Ascending aorta (tissue), 2 donors: ENCODE measurements at regions of chr2 and their contacts with region 1.

Region 1: GRCh38 chr2:231191896-231192872 is 6.2 kb upstream of the ARMC9 start:
- DNase-seq: peak in 1 of 2 donors; percentile 93
- H3K4me3 ChIP-seq: no peak overlapping the region
- H3K27ac ChIP-seq: peak overlapping the region; percentile 96 to 98
- H3K4me1 ChIP-seq: peaks cover 16 to 37% of the 10 kb centered on the region in 2 donors
- H3K27me3 ChIP-seq: no peaks in the 10 kb centered on the region
- CTCF ChIP-seq: peak; percentile 67 to 76 (median 68)

Region 2: GRCh38 chr2:231037731-231038482 is 154.3 kb before region 1 on chr2:
- intact Hi-C with region 1: no loop called
- DNase-seq: no peak
- H3K4me3 ChIP-seq: peak overlapping the region; percentile 16 to 47
- H3K27ac ChIP-seq: no peak overlapping the region
- H3K4me1 ChIP-seq: peaks cover 0 to 3% of the 10 kb centered on the region in 2 donors
- H3K27me3 ChIP-seq: peaks cover 3% of the 10 kb centered on the region
- CTCF ChIP-seq: no peak

Region 3: GRCh38 chr2:231068525-231069222 is 123.5 kb before region 1 on chr2:
- intact Hi-C with region 1: no loop called
- DNase-seq: no peak
- H3K4me3 ChIP-seq: no peak overlapping the region
- H3K27ac ChIP-seq: no peak overlapping the region
- H3K4me1 ChIP-seq: no peaks in the 10 kb centered on the region
- H3K27me3 ChIP-seq: no peaks in the 10 kb centered on the region
- CTCF ChIP-seq: no peak

Region 4: GRCh38 chr2:231104115-231104713 is 88.0 kb before region 1 on chr2:
- intact Hi-C with region 1: loop called (anchors 1 kb)
- DNase-seq: peak in 1 of 2 donors; percentile 81
- H3K4me3 ChIP-seq: no peak overlapping the region
- H3K27ac ChIP-seq: peak overlapping the region; percentile 31 to 50
- H3K4me1 ChIP-seq: no peaks in the 10 kb centered on the region
- H3K27me3 ChIP-seq: no peaks in the 10 kb centered on the region
- CTCF ChIP-seq: peak; percentile 81 to 88 (median 83)

Region 5: DNA sequence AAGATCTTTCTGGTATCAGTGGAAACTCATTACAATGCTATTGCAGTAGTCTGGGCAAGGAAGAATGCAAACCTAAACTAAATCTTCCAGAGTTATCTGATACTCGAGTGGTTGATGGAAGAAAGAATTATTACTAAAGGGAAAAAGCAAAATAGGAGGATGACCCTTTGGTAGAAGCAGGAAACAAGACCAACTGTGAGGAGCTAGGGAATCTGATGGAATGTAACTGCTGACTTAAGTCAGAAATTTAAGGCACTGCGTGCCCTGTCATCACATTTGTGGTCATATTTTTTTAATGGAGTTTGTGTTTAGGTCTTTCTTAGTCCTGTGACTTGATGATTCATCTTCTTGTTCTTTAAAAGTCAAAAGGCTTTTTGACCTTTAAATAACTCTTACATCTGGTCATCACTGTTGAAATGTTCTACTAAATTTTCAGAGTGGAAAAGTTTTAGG is 30.3 kb before region 1 on chr2:
- intact Hi-C with region 1: loop called (anchors 2 kb)
- DNase-seq: no peak
- H3K4me3 ChIP-seq: no peak overlapping the region
- H3K27ac ChIP-seq: peak overlapping the region; percentile 55 to 85
- H3K4me1 ChIP-seq: peaks cover 7 to 24% of the 10 kb centered on the region in 2 donors
- H3K27me3 ChIP-seq: no peaks in the 10 kb centered on the region
- CTCF ChIP-seq: no peak

Region 6: GRCh38 chr2:231222318-231223055 is 30.3 kb after region 1 on chr2:
- intact Hi-C with region 1: loop called (anchors 5 kb)
- DNase-seq: peak in 1 of 2 donors; percentile 73
- H3K4me3 ChIP-seq: peak overlapping the region in 1 of 2 donors; percentile 30
- H3K27ac ChIP-seq: peak overlapping the region; percentile 85 to 88
- H3K4me1 ChIP-seq: peaks cover 0 to 14% of the 10 kb centered on the region in 2 donors
- H3K27me3 ChIP-seq: no peaks in the 10 kb centered on the region
- CTCF ChIP-seq: no peak

Region 7: DNA sequence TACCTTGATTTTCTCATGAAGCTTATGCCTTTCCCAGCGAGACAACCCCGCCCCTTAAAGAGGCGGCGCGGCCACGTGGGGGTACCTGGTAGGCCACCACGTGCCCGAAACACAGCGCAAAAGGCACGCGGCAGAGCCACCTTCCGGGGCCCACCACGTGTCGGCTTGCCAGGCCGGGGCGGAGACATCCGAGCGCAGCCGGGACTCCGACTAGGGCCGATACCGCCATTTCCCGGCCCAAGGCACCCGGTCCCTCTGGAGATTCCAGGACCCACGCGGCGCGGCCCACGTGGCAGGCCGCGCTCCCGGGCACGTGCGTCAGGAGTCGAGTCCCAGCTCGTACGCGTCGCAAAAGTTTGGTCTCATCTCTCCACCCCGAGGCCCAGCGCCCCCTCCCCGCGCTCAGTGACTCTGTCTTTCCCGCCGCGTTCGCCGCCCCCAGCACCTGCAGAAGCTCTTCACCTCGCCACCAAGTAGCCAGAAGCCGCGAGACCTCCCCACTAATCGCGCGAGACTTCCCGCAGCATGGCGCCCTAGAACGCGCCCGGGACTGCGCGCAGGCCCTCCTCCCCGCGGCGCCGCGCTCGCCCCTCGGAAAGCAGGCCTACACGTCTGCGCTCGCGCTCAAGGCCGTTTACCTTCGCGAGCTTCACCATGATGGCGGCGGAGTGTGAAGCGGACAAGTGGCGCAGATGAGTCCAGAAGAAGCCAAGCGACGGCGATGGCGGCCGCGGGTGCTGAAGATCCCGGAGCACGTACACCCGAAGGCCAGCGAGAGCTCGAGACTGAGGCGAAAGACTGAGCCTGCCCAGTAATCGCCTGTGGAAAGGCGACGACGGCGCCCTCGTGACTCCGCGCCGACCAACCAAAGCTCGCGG is 271.8 kb after region 1 on chr2 and contains the start of gene NCL:
- intact Hi-C with region 1: loop called (anchors 5 kb)
- DNase-seq: peak; percentile 35 to 88
- H3K4me3 ChIP-seq: peak within 1 kb of the TSS; percentile 78 to 79
- H3K27ac ChIP-seq: peak within 1 kb of the TSS; percentile 97 to 98
- H3K4me1 ChIP-seq: peaks cover 6 to 16% of the 10 kb centered on the region in 2 donors
- H3K27me3 ChIP-seq: no peaks in the 10 kb centered on the region
- CTCF ChIP-seq: no peak
- total RNA-seq, gene NCL: 136 TPM

Region 8: GRCh38 chr2:231709981-231710798 is 518.0 kb after region 1 on chr2:
- intact Hi-C with region 1: no loop called
- DNase-seq: peak in 1 of 2 donors; percentile 92
- H3K4me3 ChIP-seq: peak overlapping the region; percentile 73 to 98
- H3K27ac ChIP-seq: peak overlapping the region; percentile 100
- H3K4me1 ChIP-seq: peaks cover 23 to 27% of the 10 kb centered on the region in 2 donors
- H3K27me3 ChIP-seq: no peaks in the 10 kb centered on the region
- CTCF ChIP-seq: peak; percentile 28 to 100 (median 57)